ENCODE measurements at regions of chr13 and their contacts with region 1.

Region 1: DNA sequence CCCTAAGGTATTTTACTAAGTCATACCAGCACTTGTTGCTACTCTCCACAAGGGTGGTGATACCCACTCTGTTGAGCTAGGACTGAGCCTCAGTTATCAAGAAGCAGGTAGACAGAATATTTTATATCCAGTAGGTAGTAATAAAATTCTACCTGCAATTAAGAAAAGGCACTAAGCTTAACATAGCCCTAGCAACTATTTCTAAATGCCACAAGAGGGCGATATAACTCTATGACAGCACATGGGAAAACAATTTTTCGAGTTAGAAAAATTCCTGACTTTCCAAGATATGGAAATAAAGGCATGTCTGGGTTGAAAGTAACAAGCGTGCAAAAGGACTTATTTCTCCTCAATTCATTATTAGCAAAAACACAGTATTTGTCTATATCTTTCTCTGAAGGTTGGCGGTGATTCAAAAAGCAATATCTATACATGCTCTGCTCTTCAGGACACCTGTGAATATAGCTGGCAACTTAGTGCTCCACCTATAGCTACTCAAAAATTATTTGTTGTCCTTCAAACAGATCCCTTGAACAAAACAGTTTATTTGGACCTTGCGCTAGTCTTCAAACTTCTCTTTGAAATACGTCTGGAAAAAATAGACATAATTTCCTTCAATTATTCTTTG is 14.7 kb downstream of the CCDC169 start:
- DNase-seq: no peak
- ATAC-seq: peak; percentile 70
- H3K4me3 ChIP-seq: no peak overlapping the region
- H3K27ac ChIP-seq: no peak overlapping the region
- H3K4me1 ChIP-seq: no peaks in the 10 kb centered on the region
- H3K27me3 ChIP-seq: no peaks in the 10 kb centered on the region
- CTCF ChIP-seq: peak; percentile 61 to 80 (median 68)
- EP300 ChIP-seq: no peak
- POLR2A ChIP-seq: no peak
- RAD21 ChIP-seq: peak; percentile 84

Region 2: GRCh38 chr13:35978603-35979316 is 304.2 kb before region 1 on chr13:
- CTCF ChIA-PET with region 1: interaction called, 122 read pairs
- POLR2A ChIA-PET with region 1: no interaction called
- RAD21 ChIA-PET with region 1: interaction called, 3 read pairs
- SMC1A ChIA-PET with region 1: interaction called, 5 read pairs
- in situ Hi-C with region 1: loop called (anchors 5 kb)
- intact Hi-C with region 1: no loop called
- DNase-seq: no peak
- ATAC-seq: peak; percentile 56; the same call in 2 of the 3 replicates
- H3K4me3 ChIP-seq: no peak overlapping the region
- H3K27ac ChIP-seq: no peak overlapping the region
- H3K4me1 ChIP-seq: no peaks in the 10 kb centered on the region
- H3K27me3 ChIP-seq: no peaks in the 10 kb centered on the region
- CTCF ChIP-seq: peak; percentile 52 to 68 (median 62); a peak in 5 of 6 replicates
- EP300 ChIP-seq: no peak
- POLR2A ChIP-seq: no peak
- RAD21 ChIP-seq: peak; percentile 82

Region 3: GRCh38 chr13:36242761-36243160 is 40.2 kb before region 1 on chr13:
- CTCF ChIA-PET with region 1: no interaction called
- POLR2A ChIA-PET with region 1: no interaction called
- RAD21 ChIA-PET with region 1: no interaction called
- SMC1A ChIA-PET with region 1: no interaction called
- in situ Hi-C with region 1: no loop called
- intact Hi-C with region 1: no loop called
- DNase-seq: no peak
- ATAC-seq: no peak
- H3K4me3 ChIP-seq: no peak overlapping the region
- H3K27ac ChIP-seq: no peak overlapping the region
- H3K4me1 ChIP-seq: no peaks in the 10 kb centered on the region
- H3K27me3 ChIP-seq: no peaks in the 10 kb centered on the region
- CTCF ChIP-seq: no peak
- EP300 ChIP-seq: no peak
- POLR2A ChIP-seq: no peak
- RAD21 ChIP-seq: no peak

Region 4: GRCh38 chr13:36302289-36302688 is 19.4 kb after region 1 on chr13:
- CTCF ChIA-PET with region 1: interaction called, 8 read pairs
- POLR2A ChIA-PET with region 1: no interaction called
- RAD21 ChIA-PET with region 1: interaction called, 12 read pairs
- SMC1A ChIA-PET with region 1: interaction called, 8 read pairs
- in situ Hi-C with region 1: no loop called
- intact Hi-C with region 1: no loop called
- DNase-seq: no peak
- ATAC-seq: no peak
- H3K4me3 ChIP-seq: no peak overlapping the region
- H3K27ac ChIP-seq: no peak overlapping the region
- H3K4me1 ChIP-seq: no peaks in the 10 kb centered on the region
- H3K27me3 ChIP-seq: peaks cover 0 to 8% of the 10 kb centered on the region in 2 experiments; a peak in 2 of 4 replicates
- CTCF ChIP-seq: no peak
- EP300 ChIP-seq: no peak
- POLR2A ChIP-seq: no peak
- RAD21 ChIP-seq: no peak

Region 5: GRCh38 chr13:36420437-36420891 is 137.5 kb after region 1 on chr13:
- CTCF ChIA-PET with region 1: interaction called, 26 read pairs
- POLR2A ChIA-PET with region 1: no interaction called
- RAD21 ChIA-PET with region 1: interaction called, 4 read pairs
- SMC1A ChIA-PET with region 1: interaction called, 5 read pairs
- in situ Hi-C with region 1: no loop called
- intact Hi-C with region 1: loop called (anchors 5 kb)
- DNase-seq: peak; percentile 25
- ATAC-seq: peak; percentile 86
- H3K4me3 ChIP-seq: no peak overlapping the region
- H3K27ac ChIP-seq: no peak overlapping the region
- H3K4me1 ChIP-seq: no peaks in the 10 kb centered on the region; the same call in 1 of the 2 replicates
- H3K27me3 ChIP-seq: no peaks in the 10 kb centered on the region
- CTCF ChIP-seq: peak; percentile 79 to 86 (median 84)
- EP300 ChIP-seq: no peak; a peak in 1 of 4 replicates
- POLR2A ChIP-seq: no peak
- RAD21 ChIP-seq: peak; percentile 83

Region 6: DNA sequence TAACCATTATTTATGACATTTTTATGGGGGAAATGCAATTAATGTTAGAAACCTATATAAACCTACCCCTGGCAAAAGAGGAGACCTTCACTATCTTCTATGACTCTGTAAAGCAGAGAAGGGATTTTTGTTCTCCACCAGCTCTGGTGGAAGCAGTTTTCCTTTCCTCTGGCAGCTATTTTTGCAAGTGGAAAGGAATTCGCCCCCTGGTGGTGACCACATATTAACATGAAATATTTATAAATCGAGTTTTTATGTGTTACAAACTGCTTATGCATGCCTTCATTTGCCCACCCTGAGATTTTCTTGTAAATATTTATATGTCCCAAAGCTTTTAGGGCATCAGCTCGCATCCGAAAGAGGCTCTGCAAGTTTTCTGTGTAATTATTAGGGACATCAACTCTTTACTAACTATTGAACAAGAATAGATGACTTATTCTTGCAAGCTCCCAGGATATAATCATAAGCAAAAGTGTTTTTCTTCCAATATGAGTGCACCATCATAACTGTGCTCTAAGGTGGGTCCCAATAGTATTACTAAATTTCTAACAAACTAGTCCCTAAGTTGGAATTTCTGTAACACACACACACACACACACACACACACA is 453.3 kb after region 1 on chr13:
- CTCF ChIA-PET with region 1: interaction called, 57 read pairs
- POLR2A ChIA-PET with region 1: no interaction called
- RAD21 ChIA-PET with region 1: interaction called, 7 read pairs
- SMC1A ChIA-PET with region 1: interaction called, 21 read pairs
- in situ Hi-C with region 1: no loop called
- intact Hi-C with region 1: loop called (anchors 2 kb)
- DNase-seq: no peak
- ATAC-seq: no peak
- H3K4me3 ChIP-seq: no peak overlapping the region
- H3K27ac ChIP-seq: no peak overlapping the region
- H3K4me1 ChIP-seq: no peaks in the 10 kb centered on the region
- H3K27me3 ChIP-seq: no peaks in the 10 kb centered on the region
- CTCF ChIP-seq: peak; percentile 48 to 62 (median 56)
- EP300 ChIP-seq: no peak
- POLR2A ChIP-seq: no peak
- RAD21 ChIP-seq: peak; percentile 56

Region 7: DNA sequence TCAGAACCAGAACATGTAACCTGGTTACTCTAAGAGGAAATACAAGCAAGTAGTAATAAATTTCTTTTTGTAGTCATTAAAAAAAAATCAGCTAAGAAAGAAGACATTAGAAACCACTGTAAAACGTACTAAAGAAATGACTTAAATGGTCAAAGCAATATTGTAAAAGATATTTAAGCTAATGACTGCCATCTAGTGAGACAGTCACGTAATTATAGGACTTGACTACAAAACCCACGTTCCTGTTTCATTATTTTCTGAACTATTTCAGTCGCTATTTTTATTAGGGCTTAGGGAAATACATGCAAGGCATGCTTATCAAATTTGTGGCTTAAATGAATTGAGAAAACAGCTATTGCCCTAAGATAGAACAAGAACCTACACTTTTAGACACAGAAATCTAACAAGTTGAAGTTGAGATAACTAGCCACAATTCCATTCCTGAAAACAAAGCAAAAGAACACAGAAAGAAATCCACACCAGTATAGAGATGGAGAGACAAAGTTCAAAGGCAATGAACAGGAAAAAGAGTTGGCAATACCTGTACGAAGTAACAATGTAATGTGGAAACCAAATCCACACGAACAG is 698.3 kb after region 1 on chr13:
- CTCF ChIA-PET with region 1: interaction called, 22 read pairs
- POLR2A ChIA-PET with region 1: no interaction called
- RAD21 ChIA-PET with region 1: interaction called, 5 read pairs
- SMC1A ChIA-PET with region 1: interaction called, 6 read pairs
- in situ Hi-C with region 1: no loop called
- intact Hi-C with region 1: no loop called
- DNase-seq: no peak
- ATAC-seq: peak; percentile 74
- H3K4me3 ChIP-seq: no peak overlapping the region
- H3K27ac ChIP-seq: no peak overlapping the region
- H3K4me1 ChIP-seq: no peaks in the 10 kb centered on the region
- H3K27me3 ChIP-seq: no peaks in the 10 kb centered on the region
- CTCF ChIP-seq: peak; percentile 25 to 59 (median 47); a peak in 5 of 6 replicates
- EP300 ChIP-seq: no peak
- POLR2A ChIP-seq: no peak
- RAD21 ChIP-seq: peak; percentile 61